GM18951 (cell line): ENCODE measurements at regions of chr10 and their contacts with region 1.

Region 1: DNA sequence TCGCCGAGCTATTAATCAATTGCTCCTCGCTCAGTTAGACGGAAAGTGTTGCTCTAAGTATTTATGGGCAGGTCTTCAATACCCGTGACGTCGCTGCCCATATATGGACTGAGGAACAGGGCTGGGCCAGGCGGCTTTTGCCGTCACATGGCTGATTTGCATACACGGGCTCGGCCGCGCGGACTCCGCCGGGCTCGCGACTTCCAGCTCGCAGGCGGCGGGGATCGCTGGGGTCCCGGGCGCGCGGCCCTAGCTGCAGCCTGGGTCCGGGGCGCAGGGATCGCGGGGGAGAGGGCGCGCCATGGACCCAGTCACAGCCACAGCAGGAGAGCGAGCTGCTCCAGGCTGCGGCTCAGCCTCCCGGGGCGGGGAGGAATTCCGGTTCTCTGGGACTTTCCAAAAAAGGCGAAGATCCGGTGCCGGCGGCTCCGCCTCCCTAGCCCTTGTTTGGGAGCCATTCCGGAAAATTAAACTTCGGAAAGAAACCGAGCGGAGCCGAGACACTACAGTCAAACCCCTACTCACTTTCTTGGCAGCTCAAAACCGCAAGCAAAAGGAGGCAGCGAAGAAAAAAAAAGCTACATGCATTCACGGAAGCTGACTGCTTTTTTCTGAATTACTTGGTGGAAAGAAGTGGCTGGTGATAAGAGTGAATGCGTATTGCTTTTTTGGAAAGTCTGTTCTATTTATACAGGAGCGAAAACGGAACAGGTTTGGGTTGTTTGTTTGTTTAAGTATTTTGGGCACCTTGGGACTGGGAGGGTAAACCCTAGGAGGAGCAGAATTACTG is at the start of gene EGR2:
- POLR2A ChIP-seq: peak; percentile 46

Region 2: DNA sequence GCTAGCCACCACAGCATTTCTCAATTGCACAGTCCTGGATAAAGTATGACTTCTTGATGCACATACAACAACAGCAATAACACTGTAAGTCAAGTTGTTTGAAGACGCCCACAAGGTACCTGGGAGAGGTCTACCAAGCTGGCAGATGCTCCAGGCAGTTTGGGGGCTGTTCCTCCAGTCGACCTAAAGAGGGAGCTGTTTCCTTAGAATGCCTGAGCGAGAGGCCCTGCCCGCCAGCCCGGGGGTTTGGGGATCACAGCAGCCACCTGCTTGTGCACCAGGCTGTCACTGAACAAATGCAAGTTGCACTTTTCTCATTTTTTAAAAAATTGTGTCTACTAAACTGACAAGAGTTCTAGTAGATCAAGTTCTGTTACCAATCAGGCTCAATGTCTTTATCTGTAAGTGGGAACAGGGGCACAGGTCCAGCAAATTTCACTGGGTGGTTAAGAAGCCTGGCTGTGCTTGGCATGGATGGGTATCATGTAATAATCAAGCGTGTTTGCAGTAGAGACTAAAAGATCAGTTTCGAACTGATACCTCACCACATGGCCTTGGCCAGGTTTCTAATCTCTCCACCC is 205.8 kb before region 1 on chr10:
- in situ Hi-C with region 1: loop called (anchors 10 kb)
- POLR2A ChIP-seq: no peak